CD8-positive, alpha-beta memory T cell (primary cell): ENCODE measurements at regions of chr1 and their contacts with region 1.

Region 1: DNA sequence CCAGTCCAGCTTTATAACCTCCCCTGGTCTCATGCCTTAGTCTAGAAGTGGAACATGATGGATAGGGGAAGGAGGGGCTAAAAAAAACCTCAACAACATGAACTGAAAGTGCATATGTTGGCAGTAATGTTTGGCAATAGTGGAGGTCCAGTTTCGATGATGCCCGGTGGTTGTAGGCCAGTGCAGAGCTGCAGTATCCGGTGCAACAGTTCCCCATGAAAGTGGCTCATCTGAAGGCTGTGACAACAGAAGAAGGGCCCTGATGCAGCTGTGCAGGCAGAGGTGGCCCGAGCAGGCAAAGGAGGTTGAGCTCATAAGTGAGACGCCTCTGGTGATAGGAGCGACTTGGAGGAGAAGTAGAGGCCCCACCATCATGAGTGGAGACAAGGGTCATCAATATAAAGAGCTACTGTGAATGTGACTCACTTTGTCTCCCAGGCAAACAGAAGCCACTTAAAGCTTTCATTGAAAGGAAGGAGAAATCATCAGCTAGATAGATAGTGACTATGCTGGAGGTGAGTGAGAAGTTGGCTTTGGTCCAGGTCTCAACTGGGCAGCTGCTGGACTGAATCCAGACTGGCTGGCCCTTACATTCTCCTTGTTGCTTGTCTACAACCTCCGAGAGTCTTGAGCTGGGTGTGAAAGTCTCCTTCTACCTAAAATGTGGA is 10.2 kb upstream of the CREG1 start:
- DNase-seq: no peak
- H3K4me3 ChIP-seq: no peak overlapping the region
- H3K4me3 Mint-ChIP-seq: no peak overlapping the region
- H3K27ac ChIP-seq: no peak overlapping the region
- H3K27ac Mint-ChIP-seq: no peak overlapping the region
- H3K4me1 ChIP-seq: no peaks in the 10 kb centered on the region
- H3K4me1 Mint-ChIP-seq: no peaks in the 10 kb centered on the region
- H3K27me3 ChIP-seq: no peaks in the 10 kb centered on the region
- H3K27me3 Mint-ChIP-seq: peaks cover 3 to 5% of the 10 kb centered on the region in 2 donors

Region 2: DNA sequence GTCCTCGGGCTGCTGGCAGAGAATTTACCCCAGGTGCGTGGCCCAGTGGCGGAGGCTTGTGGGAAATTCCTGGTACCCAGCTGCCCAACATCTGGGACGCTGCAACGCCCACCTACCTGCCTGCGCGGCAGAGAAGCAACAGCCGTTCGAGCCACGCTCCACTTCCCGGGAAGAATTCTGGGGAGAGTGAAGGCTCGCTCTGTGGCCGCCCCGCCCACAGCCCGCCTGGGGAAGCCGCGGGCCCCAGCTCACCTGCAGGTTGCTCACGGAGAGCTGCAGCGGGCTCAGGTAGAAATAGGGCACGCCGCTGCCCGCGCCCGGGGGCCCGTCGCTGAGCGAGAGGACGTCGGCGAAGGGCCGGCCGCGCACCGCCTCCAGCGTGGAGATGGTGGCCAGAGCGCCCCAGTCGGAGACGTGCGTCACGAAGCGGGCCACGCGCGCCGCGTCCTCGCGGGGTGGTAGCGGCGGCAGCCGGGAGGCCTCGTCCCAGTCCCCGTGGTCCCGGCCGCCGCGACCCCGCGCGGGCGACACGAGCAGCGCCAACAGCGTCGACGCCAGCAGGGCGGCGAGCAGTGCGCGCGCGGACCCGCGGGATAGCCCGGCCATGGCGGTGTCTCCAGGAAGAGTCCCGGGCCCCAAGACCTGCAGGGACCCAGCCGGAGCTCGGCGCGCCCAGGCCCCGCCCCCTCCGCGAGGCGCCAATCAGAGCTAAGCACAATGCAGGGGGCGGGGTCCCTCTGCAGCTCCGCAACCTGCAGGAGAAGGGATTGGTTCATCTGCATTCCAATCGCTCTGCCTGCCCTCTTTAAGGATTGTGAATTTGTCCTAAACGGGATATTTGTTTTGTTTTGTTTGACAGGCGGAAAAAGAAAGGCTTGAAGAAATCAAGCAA is 10.3 kb before region 1 on chr1 and contains the start of gene CREG1:
- CTCF ChIA-PET with region 1: interaction called, 11 read pairs
- POLR2A ChIA-PET with region 1: no interaction called
- DNase-seq: peak; percentile 85 to 91 (median 88)
- H3K4me3 ChIP-seq: peak within 1 kb of the TSS; percentile 69
- H3K4me3 Mint-ChIP-seq: peak within 1 kb of the TSS; percentile 80 to 95 (median 89)
- H3K27ac ChIP-seq: peak within 1 kb of the TSS; percentile 62
- H3K27ac Mint-ChIP-seq: peak within 1 kb of the TSS; percentile 5 to 95 (median 66)
- H3K4me1 ChIP-seq: peaks cover 27% of the 10 kb centered on the region
- H3K4me1 Mint-ChIP-seq: peaks cover 33 to 46% (median 37%) of the 10 kb centered on the region in 3 donors
- H3K27me3 ChIP-seq: no peaks in the 10 kb centered on the region
- H3K27me3 Mint-ChIP-seq: peaks cover 0 to 4% of the 10 kb centered on the region in 2 donors
- total RNA-seq, gene CREG1: 14.6 to 15.3 TPM